GM13976 (cell line): ENCODE measurements at regions of chr1 and their contacts with region 1.

Region 1: GRCh38 chr1:119549719-119550132 is 42.7 kb downstream of the HSD3B1 start:
- DNase-seq: peak; percentile 20
- CTCF ChIP-seq: peak; percentile 53

Region 2: DNA sequence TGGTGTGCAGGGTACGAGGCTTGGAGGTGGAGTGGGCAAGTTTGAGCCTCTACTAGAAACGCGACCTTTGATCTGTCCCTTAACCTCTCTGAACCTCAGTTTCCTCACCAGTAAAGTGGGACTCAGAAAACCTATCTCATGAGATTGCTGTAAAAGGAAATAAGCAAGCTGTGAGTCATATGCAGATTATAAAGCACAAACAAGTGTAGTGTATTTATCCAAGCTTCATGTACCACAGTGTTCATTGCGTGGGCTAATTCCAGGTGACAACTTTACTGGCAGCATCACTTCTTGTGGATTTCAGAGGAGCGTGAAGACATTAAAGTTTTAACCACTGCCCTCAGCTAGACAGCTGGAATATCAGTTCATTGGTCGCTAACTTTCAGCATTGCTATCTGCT is 54.0 kb after region 1 on chr1:
- in situ Hi-C with region 1: loop called (anchors 10 kb)
- DNase-seq: no peak
- CTCF ChIP-seq: no peak

Region 3: DNA sequence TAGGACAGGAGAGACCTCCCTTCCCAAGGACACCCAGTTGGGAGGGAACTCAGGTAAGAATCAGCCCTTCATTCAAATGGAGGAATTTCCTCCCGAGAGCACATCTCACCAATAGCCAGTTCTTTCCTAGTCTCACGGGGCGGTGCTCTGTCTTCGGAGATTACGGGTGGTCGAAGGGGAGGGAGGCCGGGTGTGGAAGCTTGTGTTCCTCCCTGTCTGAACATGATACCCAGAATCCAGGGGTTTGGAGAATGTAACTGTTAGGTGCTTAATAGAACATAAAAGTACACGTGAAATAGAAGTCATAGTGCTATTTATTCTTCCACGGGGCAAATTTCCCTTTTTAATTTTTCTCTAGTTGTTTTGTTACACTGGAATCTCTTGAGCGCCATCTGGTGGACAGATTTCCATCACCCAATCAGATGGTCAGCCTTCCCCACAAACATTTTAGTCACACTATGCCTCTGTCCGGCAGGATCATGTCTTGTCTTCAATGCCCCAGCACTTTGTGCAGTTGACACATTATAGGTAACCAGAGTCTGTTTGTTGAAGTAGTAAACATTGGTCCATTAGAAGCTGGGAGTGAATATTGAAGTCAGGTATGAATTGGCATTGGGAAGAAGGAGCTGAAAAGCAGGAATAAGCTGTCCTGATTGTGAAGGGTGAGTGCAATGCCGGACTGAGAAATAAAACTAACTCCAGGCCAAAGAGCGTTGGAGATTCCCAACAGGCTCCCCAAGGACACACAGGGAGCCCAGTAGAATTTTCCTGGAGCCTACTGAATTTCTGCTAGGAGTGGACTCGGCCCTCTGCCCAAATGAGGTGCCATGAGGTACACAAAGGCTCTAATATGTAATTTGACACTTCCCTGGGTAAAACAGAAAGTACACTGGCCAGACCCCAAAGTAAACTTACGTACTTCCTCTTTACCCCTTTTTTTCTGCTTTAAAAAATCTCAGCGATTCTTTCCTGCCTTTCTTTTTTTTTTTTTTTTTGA is 125.9 kb after region 1 on chr1:
- in situ Hi-C with region 1: loop called (anchors 25 kb)
- DNase-seq: peak; percentile 80
- CTCF ChIP-seq: peak; percentile 61